B cell (primary cell): ENCODE measurements at regions of chr11 and their contacts with region 1.

Region 1: DNA sequence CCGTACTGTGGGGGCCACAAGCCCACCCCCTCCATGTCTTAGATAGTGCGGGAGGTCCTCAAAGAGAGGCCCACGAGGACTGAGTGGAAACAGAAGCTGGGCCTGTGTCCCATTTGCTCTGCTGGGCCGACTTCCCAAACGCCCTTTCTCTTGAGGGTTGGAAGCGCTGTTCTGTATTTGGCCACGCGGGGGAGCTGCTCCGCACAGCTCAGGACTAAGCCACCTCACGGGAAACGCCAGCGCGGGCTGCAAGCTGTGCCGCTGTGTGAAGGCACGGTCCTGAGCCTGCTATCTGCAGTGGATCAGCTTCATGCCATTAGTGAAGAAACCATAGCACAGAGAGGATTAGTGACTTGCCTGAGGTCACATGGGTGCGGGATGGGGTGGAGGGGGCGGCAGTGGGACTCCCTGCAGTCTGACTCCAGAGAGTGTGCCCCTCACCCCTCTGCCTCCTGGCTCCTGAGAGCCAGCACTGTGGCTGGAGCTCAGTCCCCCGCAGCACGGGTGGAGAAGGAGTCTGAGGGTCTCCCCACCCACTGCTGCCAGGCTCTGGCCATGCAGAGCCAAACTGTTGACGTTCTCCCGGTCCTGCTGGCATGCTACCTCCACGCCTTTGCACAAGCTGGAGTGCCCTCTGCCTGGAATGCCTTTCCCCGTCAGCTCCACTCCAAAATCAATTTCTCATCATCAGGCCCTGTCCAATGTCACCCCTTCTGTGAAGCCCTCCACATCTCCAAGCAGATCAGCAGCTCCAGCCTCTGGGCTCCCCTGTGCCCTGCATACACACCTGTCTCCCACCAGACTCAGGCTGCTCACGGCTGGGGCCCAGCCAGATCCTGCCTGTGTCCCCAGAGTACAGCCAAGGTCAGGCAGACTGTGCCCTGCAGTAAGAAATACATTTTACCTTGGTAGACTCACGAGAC is 51.5 kb upstream of the LRRC32 start:
- DNase-seq: peak; percentile 77
- ATAC-seq: peak; percentile 76
- H3K4me3 ChIP-seq: no peak overlapping the region
- H3K4me3 Mint-ChIP-seq: no peak overlapping the region
- H3K27ac ChIP-seq: no peak overlapping the region
- H3K27ac Mint-ChIP-seq: no peak overlapping the region
- H3K4me1 ChIP-seq: peaks cover 5 to 8% of the 10 kb centered on the region in 2 donors
- H3K4me1 Mint-ChIP-seq: peaks cover 7% of the 10 kb centered on the region
- H3K27me3 ChIP-seq: peaks cover 0 to 28% (median 10%) of the 10 kb centered on the region in 4 experiments
- H3K27me3 Mint-ChIP-seq: peaks cover 42% of the 10 kb centered on the region
- CTCF ChIP-seq: peak; percentile 88

Region 2: GRCh38 chr11:76799066-76799804 is 77.2 kb after region 1 on chr11:
- CTCF ChIA-PET with region 1: interaction called, 9 read pairs
- POLR2A ChIA-PET with region 1: no interaction called
- intact Hi-C with region 1: loop called (anchors 1 kb)
- DNase-seq: peak; percentile 78
- ATAC-seq: peak; percentile 95
- H3K4me3 ChIP-seq: peak overlapping the region in 4 of 5 experiments; percentile 23 to 45 (median 40)
- H3K4me3 Mint-ChIP-seq: peak overlapping the region; percentile 64
- H3K27ac ChIP-seq: no peak overlapping the region
- H3K27ac Mint-ChIP-seq: no peak overlapping the region
- H3K4me1 ChIP-seq: peaks cover 5 to 10% of the 10 kb centered on the region in 2 donors
- H3K4me1 Mint-ChIP-seq: peaks cover 11% of the 10 kb centered on the region
- H3K27me3 ChIP-seq: peaks cover 0 to 13% (median 1%) of the 10 kb centered on the region in 4 experiments
- H3K27me3 Mint-ChIP-seq: peaks cover 25% of the 10 kb centered on the region
- CTCF ChIP-seq: peak; percentile 93